Pancreas (tissue), 10 donors: ENCODE measurements at regions of chr7 and their contacts with region 1.

Region 1: DNA sequence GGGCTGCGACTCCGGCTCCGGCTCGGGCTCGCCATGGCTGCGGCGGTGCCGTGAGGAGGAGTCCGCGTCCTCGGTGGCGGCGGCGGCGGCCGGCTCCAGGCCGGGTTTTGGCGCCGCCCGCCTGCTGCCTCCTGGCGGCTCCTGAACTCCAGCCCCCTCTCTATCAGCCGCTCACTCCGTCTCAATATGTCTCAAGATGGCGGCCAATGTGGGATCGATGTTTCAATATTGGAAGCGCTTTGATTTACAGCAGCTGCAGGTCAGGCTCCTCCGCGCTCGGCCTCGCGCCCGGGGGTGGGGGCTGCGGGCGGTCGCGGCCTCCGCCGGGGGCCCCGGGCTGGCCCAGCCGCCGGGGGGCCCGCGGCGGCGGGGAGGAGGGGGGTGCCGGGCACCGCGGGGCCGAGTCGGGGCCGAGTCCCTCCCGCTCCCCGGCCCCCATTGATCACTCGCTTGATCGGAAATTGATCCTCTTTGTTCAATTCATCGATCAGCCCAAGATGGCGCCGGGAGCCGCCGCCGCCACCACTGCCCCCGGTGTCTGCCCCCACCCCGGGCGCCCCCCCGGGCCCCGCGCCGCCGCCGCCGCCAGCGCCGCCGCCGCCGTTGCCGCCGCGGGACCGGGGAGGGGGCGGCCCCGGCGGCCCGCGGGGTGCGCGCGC is 1.5 kb upstream of the CUX1 start:
- DNase-seq: peak; percentile 70 to 86 (median 80)
- ATAC-seq: peak; percentile 64 to 78 (median 71)
- H3K4me3 ChIP-seq: peak overlapping the region; percentile 22 to 85 (median 62)
- H3K27ac ChIP-seq: peak overlapping the region in 2 of 4 donors; percentile 77 to 80
- H3K4me1 ChIP-seq: peaks cover 0 to 17% (median 11%) of the 10 kb centered on the region in 3 donors
- H3K27me3 ChIP-seq: no peaks in the 10 kb centered on the region
- CTCF ChIP-seq: no peak

Region 2: DNA sequence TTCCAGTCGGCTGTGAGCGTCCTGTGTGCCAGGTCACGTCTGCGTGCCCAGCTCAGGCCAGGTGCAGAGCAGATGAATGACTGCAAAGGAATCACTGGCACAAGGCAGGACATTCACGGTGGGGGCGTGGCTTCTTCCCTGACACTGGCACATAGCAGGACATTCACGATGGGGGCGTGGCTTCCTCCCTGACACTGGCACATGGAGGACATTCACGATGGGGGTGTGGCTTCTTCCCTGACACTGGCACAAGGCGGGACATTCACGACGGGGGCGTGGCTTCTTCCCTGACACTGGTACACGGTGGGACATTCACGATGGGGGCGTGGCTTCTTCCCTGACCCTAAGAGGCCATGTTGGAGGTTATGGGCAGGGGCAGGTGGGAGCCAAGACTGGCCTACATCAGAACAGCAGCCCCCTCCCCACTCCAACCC is 251.2 kb before region 1 on chr7:
- intact Hi-C with region 1: no loop called
- DNase-seq: peak in 1 of 6 donors; percentile 41
- ATAC-seq: no peak
- H3K4me3 ChIP-seq: no peak overlapping the region
- H3K27ac ChIP-seq: no peak overlapping the region
- H3K4me1 ChIP-seq: no peaks in the 10 kb centered on the region
- H3K27me3 ChIP-seq: no peaks in the 10 kb centered on the region
- CTCF ChIP-seq: no peak

Region 3: DNA sequence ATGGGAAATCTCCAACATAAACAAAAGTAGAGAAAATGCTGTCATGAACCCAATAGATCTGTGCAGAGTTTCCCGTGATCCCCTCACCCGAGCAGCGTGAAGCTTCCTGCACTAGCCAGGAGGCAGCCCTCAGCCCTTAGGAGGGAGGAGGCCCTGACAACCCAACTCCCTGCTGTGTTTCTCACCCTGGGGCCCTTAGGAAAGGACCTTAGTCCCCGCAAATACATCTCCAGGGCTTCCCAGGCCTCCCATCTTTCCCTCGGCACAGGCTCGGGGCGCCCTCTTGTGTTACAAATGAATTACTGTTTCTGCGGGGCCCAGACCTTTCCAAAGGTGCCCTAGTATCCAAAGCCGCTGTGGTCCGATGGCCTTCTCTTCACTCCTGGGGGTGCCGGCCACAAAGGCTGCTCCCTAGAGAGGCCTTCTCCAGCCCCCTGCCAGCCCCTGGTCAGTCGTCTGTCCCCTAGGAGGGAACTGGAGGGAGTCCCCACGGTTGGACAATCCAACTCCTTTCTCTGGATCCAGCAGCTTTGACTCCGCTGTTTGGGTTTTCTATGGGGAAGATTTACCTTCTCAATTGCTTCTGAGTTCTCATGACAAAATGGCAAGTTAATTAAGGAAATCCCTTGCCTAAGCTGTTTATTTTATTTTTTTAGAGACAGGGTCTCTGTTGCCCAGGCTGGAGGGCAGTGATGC is 420.8 kb after region 1 on chr7:
- intact Hi-C with region 1: loop called in 1 of 3 experiments (anchors 10 kb)
- DNase-seq: peak; percentile 29 to 81 (median 66)
- ATAC-seq: peak; percentile 36 to 79 (median 62)
- H3K4me3 ChIP-seq: no peak overlapping the region
- H3K27ac ChIP-seq: no peak overlapping the region
- H3K4me1 ChIP-seq: peaks cover 0 to 6% (median 0%) of the 10 kb centered on the region in 3 donors
- H3K27me3 ChIP-seq: no peaks in the 10 kb centered on the region
- CTCF ChIP-seq: peak; percentile 55 to 84 (median 66)